GM13977 (cell line): ENCODE measurements at regions of chr6 and their contacts with region 1.

Region 1: DNA sequence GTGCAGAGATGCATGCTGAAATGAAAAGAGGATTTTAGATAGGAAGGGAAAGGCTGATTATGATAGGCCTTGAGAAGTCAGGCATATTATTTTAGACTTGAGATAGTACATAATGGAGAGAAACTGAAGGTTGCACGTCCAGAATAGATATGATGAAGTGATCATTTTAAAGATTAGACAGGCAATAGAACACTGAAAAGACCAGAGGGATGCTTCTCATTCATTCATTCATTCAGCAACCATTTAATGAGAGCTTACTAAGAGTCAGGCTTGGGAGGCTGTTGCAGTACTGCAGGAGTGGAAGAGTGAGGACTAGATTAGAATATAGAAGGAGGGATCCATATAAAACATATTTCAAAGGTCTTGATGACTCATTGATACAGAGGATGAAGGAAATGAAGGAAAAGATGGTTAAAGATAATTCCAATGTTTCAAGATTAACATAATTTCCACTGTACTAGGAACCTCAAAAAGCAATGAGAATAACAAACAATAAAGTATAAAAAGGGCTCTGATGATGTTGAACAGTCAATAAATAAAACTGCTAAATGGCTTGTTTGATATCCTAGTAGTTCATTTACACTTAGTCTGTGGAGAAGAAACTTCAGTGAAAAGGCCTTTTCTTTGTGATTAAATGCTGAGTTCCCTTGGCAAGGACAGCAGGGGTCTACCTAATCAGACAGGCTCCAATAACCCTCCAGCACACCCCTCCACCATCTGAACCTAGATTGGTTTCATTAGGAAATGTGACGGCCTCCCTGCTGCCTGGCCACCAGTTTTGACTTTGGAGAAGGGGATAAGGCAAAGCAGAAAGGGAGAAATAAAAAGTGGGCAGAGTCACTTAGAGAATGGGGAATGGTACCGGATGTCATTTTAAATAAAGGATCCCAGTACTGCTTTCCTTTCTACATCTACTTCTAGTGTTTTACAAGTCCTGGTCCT is 5.3 kb upstream of the FBXO9 start:
- DNase-seq: no peak
- CTCF ChIP-seq: no peak

Region 2: DNA sequence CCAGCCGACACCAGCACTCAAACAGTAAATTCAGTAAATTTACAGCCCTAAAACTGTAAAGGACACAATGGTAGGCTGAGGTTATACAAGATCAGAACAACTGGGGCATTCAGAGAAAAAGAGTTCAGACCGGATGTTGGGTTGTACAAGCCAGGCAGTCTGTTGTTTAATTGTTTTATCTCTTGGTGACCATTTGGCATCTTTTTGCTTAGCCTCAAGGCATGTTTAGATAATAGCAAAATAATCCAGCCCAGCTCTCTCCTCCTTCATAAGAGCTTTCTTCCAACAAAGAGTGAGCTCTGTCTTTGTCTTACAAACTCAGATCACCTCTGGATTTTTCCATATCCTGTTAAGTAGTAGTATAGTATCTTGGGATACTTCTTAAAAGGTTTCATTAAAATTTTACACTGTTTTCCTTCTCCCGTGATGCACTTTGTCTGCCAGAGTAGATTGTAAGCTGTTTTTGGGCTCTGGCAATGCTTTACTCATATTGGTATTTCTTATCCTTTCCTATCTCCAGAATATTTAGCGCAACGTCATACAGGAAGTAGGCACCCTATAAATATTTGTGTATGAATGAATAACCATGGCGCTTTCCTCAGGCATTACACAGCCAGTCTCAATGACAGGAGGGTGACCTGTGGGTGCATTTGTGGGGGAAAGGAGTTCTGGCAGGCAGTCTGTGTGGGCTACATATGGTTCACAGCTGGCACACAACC is 447.4 kb before region 1 on chr6:
- in situ Hi-C with region 1: no loop called
- DNase-seq: no peak
- CTCF ChIP-seq: no peak

Region 3: DNA sequence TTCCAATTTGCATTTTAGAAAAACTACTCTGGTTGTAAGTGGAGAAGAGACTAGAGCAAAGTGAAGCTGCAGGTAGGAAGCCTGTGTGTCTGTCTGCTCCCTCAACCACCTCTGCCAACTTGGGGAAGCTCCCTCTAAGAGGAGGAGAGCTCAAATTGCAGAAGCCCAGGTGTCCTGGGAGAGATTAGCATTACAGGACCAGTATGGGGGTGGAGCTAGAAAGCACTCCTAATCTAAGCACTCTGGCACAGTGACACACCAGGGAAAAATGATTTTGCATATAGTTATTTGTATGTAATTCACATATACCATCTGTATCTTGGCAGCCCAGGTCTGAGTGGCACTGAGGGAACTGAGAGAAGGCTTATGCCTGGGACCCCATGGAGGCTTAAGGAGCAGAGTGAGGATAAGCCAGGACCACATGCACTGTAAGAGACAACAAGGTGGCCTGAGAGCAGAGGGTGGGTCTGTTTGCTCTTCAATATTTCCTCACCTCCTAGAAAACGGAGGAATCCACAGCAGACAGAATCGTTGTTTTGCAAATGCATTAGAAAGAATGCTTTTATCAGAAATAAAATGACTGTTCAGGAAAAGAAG is 310.3 kb before region 1 on chr6:
- in situ Hi-C with region 1: no loop called
- DNase-seq: no peak
- CTCF ChIP-seq: no peak

Region 4: DNA sequence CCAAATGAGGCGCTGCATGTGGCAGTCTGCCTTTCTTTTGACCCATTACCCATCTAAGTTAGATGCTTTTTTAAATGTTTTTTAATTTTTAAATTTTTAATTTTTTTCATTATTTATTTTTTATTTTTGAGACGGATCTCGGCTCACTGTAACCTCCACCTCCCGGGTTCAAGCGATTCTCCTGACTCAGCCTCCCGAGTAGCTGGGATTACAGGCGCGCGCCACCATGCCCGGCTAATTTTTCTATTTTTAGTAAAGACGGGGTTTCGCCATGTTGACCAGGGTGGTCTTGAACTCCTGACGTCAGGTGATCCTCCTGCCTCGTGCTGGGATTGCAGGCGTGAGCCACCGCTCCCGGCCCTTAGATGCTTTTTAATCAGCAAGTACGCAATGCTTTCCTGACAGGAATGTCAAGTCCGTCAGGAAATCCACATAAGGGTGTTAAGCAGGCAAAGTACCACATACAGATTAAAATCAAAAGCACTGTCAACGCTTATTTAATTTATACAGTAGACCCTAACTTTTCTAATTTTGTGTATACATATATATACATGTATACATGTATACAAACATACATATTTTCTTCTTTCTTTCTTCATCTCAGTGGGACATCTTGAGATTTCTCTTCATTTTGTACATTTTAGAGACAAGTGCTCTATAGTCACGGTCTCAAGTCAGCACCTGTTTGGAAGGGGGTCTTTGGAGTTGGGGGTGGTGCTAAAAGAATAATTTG is 63.8 kb before region 1 on chr6:
- in situ Hi-C with region 1: loop called (anchors 10 kb)
- DNase-seq: no peak
- CTCF ChIP-seq: no peak

Region 5: GRCh38 chr6:53398247-53399026 is 338.5 kb after region 1 on chr6:
- in situ Hi-C with region 1: no loop called
- DNase-seq: no peak
- CTCF ChIP-seq: no peak

Region 6: DNA sequence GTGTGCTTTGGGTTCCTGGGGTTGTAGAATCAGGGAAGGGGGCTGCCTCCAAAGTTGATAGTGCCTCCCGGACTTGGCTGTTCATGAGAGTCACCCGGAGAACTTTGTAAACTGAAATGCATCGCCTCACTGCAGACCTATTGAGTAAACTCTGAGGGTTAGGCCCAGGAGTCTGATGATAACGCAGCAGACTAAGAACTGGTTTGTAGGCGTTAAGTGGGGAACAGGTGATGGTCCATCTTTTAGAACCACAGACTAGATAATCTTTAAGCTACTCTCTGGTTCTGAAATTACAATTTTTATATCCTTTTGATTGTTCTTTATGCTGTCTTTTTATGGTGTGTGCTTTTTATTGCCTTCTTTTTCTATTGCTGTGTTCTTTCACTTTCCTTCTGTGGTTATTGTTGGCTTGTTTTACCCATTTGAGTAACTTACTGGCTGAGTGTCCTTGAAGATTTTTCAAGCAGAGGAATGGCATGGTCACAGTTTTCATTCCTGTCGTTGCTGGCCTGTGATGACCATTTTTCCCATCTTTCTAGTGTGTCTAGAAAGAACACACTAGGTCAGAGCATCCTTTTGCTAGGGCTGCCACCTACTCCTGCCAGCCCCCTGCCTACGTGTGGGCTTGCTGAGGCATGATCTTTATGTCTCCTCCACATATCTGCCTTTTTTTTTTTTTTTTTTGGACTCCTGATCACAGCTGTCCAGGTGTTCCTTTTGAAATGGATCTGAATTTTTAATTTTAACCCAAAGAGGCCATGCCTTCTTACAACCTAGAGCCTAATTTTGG is 765.8 kb after region 1 on chr6:
- in situ Hi-C with region 1: no loop called
- DNase-seq: no peak
- CTCF ChIP-seq: no peak